ENCODE measurements at regions of chr17 and their contacts with region 1.

Region 1: DNA sequence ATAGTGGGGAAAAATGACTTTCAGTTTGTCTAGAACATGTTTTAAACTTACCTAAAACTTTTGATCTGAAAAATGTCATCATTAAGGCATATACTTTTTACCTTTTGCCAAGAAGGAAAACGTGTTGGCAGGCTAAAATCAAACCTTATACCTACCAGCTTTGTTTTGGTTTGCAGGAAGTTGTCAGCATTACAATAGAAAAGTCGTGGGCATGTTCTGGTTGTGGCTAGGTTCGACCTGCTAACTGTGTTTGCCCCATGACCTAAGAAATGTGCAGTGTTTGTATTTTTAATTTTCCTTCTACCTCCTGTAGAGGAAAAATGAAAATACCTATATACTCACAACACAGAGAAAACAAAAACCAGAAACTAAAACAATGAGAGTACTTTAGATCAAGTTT is 13.0 kb downstream of the SKAP1 start:
- DNase-seq: peak in 1 of 35 experiments; percentile 38
- ATAC-seq: peak; percentile 36 to 71 (median 55)
- H3K4me3 ChIP-seq: no peak overlapping the region
- H3K4me3 Mint-ChIP-seq: peak overlapping the region; percentile 34 to 61 (median 40)
- H3K27ac ChIP-seq: peak overlapping the region; percentile 72
- H3K27ac Mint-ChIP-seq: peak overlapping the region; percentile 91 to 96
- H3K4me1 ChIP-seq: peaks cover 56 to 57% of the 10 kb centered on the region in 2 experiments
- H3K4me1 Mint-ChIP-seq: peaks cover 88 to 94% (median 90%) of the 10 kb centered on the region in 3 donors
- H3K27me3 ChIP-seq: no peaks in the 10 kb centered on the region
- H3K27me3 Mint-ChIP-seq: no peaks in the 10 kb centered on the region

Region 2: DNA sequence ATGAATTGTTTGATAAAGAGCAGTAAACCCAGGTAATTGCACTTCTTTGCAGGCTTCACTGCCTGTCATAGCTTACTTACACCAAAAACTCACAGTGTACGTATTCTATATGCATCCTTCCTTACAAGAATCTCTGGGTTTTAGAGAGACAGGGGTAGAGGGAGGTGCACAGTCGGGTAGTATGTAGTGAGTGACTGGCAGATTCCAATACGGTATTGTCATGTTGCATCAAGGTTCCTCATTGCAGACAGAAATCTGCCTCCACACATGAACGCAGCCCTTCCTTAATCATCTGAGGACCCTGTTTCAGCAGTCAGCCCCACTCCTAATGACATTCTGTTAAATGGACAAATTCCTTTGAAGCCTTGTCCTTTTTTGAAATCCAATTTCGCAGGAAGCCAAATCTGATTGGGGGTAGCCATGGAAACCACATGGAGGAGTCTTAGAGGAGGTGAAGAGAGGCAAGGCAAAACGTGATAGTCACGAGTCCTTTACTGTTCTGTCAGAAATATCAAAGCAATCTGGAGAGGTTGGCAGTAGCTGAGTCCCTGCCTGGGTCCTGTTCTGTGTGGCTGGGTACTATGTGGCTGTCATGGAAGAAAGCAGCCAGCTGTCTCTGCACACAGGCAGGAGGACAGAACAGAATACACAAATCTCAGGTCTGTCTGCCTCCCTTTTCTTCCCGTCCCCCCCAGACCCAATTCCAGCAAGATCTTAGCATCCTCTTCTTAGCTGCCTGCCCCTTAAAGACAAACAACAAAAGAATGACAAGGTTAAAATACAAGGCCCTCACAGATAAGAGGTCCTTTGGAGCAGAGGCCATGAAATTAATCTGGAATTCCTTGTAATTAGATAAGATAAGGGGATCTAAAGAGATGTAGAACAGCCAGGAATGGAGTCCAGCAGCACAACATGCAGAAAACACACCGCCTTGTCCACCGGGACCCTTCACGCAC is 16.1 kb after region 1 on chr17:
- CTCF ChIA-PET with region 1: interaction called in 1 of 2 experiments, 3 read pairs
- POLR2A ChIA-PET with region 1: interaction called, 3 to 15 read pairs
- DNase-seq: no peak
- ATAC-seq: no peak
- H3K4me3 ChIP-seq: no peak overlapping the region
- H3K4me3 Mint-ChIP-seq: no peak overlapping the region
- H3K27ac ChIP-seq: no peak overlapping the region
- H3K27ac Mint-ChIP-seq: peak overlapping the region; percentile 40 to 73
- H3K4me1 ChIP-seq: peaks cover 53 to 55% of the 10 kb centered on the region in 2 experiments
- H3K4me1 Mint-ChIP-seq: peaks cover 89 to 98% (median 89%) of the 10 kb centered on the region in 3 donors
- H3K27me3 ChIP-seq: no peaks in the 10 kb centered on the region
- H3K27me3 Mint-ChIP-seq: no peaks in the 10 kb centered on the region